Activated T-helper 1 cell treated with anti-CD3 and anti-CD28 coated beads, Interleukin-12 subunit alpha, Interleukin-12 subunit beta, Interleukin-2, Interleukin-4 antibody, amounts not matched to agents 30 ng/mL and 10 ng/mL and 1 ng/mL, durations not matched to agents 14 hours and 24 hours and 36 hours (primary cell): ENCODE measurements at regions of chr1 and their contacts with region 1.

Region 1: DNA sequence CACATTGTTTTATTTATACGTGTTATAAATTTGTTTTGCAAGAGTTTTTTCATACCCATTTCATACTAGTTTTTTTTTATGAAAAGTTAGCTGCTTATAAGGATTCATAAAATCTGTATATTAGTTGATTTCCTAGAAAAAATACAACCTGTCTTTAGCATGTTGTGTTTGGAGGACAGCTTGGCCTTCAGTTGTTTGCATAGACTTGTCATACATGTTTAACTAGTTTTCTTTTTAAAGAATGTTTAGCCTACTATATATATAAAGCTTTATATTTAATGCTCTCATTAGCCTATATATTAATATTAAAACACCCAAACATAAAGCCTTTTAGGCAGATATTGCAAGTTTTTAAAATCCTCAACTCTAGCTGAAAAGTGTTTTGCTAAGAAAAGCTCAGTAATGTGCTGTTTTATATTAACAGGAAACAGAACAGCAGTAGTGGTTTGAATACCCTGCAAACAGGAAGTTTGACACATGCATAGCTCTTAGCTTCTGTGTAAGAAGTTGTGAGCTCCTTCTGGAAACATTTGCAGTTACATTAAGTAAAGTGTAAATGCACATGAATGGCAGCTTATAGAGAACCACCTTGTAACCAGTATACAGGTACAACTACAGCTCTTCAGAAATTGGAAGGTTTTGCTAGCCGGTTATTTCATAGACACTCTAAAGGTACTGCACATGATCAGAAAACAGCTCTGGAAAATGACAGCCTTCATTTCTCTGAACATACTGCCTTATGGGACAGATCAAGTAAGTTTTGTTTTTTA is at the start of gene PRKACB:
- DNase-seq: peak; percentile 20
- H3K4me3 Mint-ChIP-seq: peak within 1 kb of the TSS; percentile 96
- H3K27ac Mint-ChIP-seq: peak within 1 kb of the TSS; percentile 99
- H3K4me1 Mint-ChIP-seq: peaks cover 44% of the 10 kb centered on the region
- H3K27me3 Mint-ChIP-seq: no peaks in the 10 kb centered on the region
- total RNA-seq, gene PRKACB: 20.8 and 22.7 TPM in 2 replicates

Region 2: DNA sequence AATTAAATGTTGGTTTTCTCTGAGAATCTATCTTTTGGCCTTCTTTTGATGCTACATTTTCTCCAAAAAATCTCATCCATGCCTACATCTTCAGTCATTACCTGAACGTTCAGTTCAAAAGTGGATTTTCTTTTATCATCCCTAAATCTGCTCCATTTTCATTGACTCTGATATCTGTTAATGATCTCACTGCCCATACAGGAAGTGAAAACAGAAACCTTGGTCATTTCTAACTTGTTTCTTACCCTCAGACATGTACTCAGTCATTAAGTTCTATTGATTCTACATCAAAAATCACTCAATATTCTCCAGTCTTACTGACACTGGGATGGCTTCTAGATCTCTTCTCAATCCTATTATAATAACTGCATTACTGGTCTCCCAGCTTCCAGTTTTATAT is 22.8 kb after region 1 on chr1:
- intact Hi-C with region 1: loop called (anchors 2 kb)
- DNase-seq: no peak
- H3K4me3 Mint-ChIP-seq: no peak overlapping the region
- H3K27ac Mint-ChIP-seq: no peak overlapping the region
- H3K4me1 Mint-ChIP-seq: peaks cover 21% of the 10 kb centered on the region
- H3K27me3 Mint-ChIP-seq: no peaks in the 10 kb centered on the region

Region 3: DNA sequence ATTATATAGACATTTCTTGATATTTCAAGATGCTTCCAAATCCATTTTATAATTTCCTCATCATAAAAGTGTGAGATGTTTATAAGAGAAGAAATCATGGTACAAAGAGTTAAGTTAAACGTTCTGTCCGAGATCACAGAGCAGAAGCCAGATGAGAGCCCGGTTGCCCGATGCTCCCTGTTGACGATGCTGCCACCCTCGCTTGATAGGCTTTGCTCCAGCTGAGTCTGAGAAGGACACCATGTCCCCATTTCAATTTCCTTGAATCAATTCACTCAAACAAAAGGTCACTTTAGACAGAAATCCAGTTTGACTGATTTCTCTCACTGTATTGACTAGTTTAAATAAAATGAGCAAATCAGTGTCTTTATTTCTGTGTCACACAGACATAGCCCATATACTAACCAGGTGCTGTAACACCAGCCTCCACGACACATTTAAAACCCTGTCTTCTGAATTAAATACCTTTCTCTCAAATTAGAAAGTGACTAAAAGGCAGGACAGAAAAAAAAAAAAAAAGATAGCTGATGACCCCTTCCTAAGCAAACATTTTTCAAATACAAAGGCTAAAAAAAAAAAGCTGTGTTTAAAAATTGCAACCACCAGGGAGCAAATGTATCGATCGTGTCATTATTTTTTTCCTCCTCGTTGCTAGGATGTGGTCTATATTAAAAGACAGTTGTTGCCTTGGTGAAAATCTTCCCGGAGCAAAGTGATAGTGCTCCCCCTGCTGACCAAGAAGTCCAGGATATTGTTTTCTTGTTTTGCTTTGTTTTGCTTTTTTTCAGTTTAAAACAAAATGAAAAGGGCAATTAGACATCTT is 289.5 kb after region 1 on chr1:
- intact Hi-C with region 1: loop called (anchors 1 kb)
- DNase-seq: peak; percentile 54
- H3K4me3 Mint-ChIP-seq: peak overlapping the region; percentile 41
- H3K27ac Mint-ChIP-seq: peak overlapping the region; percentile 9
- H3K4me1 Mint-ChIP-seq: peaks cover 11% of the 10 kb centered on the region
- H3K27me3 Mint-ChIP-seq: no peaks in the 10 kb centered on the region

Region 4: DNA sequence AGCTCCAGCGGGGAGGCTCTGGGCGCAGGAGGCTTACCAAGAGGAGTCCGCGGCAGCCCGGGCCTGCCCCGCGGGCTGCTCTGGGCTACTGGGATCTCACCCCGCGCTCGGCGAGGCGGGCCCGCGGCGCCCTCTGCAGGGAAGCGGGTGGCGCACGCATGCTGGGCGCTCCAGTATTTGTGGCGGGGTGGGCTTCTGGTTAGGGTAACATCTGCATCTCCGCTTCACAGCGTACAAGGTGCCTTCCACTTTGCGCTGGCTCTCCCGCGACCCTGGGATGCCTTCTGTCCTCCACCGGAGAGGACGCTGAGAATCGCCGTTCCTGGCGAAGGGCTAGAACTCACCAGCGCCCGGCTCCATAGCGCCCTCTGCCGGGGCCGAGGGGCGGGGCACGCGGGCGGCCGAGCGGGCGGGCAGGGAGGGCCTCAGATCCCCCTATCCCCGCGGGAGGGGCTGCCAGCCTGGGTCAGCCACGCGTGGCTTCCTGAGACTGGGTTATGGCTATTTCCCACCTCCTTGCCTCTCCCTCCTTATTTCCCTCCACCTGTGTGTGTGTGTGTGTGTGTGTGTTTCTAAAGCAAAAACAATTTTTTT is 476.8 kb after region 1 on chr1:
- intact Hi-C with region 1: loop called (anchors 1 kb)
- DNase-seq: peak; percentile 79
- H3K4me3 Mint-ChIP-seq: peak overlapping the region; percentile 88
- H3K27ac Mint-ChIP-seq: peak overlapping the region; percentile 80
- H3K4me1 Mint-ChIP-seq: peaks cover 23% of the 10 kb centered on the region
- H3K27me3 Mint-ChIP-seq: no peaks in the 10 kb centered on the region

Region 5: DNA sequence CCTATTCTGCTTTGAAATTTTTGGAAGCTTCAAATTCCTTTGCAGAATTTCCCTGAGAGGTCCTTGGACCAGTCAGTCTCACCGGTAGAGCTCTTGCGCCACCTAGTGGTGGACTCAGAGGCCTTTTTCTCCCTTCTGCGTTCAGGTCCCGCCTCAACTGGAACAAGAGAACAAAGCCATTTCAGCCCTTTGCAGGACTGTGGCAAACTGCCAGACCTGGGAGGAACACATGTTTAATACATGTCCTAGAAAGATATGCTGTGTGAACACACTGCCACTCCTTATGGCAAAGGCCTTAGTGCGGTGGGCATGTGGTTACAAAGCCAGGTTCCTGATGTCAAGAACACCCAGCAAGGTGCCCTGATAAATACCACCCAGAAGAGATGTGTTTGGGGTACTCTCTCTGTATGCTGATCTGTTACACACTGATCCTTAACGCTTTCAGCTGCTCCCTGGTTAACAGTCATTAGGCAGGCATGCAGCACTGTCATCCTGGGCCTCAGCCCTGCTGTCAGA is 628.5 kb after region 1 on chr1:
- intact Hi-C with region 1: loop called (anchors 5 kb)
- DNase-seq: peak; percentile 48
- H3K4me3 Mint-ChIP-seq: no peak overlapping the region
- H3K27ac Mint-ChIP-seq: no peak overlapping the region
- H3K4me1 Mint-ChIP-seq: peaks cover 6% of the 10 kb centered on the region
- H3K27me3 Mint-ChIP-seq: peaks cover 21% of the 10 kb centered on the region

Region 6: DNA sequence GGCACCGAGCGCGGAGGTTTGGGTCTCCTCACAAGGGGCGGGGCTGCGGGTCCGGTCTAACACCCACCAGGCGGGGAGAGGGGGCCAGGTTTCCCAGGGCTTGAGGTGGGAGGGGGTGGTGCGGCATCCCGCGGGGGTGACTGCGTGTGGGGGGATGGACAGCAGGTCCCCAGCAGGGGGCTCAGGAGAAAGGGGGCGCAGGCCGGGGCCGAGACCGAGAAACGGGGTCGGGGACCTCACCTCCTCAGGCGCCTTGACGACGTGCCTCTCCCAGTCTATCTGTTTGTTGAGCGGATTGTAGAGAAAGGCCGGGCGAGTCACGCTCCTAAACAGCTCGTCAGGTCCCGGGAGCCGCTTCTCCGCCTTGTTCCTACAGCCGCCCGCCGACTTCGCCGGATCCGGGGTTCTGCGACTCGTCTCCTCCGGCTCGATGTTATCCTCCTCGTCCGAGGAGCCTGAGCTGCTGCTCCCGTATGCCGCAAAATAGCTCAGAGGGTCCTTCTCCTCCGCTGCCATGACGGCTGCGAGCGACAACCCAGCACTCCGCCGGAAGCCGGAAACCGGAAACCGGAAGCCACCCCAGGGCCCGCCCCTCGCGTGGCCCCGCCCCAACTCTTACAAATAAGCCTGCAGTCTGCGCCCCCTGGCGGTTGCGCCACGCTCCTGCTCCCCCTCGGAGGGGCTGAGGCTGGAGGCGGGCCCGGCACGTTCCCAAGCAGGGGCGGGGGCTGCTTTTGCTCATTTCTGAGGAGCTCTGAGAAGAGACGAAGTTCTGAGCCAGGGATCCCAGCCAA is 1115.3 kb after region 1 on chr1 and contains the start of gene C1orf52:
- intact Hi-C with region 1: loop called (anchors 5 kb)
- DNase-seq: peak; percentile 96
- H3K4me3 Mint-ChIP-seq: peak within 1 kb of the TSS; percentile 96
- H3K27ac Mint-ChIP-seq: peak within 1 kb of the TSS; percentile 90
- H3K4me1 Mint-ChIP-seq: peaks cover 40% of the 10 kb centered on the region
- H3K27me3 Mint-ChIP-seq: no peaks in the 10 kb centered on the region
- total RNA-seq, gene C1orf52: 30.9 and 31.6 TPM in 2 replicates